T-cell (primary cell): ENCODE measurements at regions of chr11 and their contacts with region 1.

Region 1: GRCh38 chr11:57800444-57801182 is 39.0 kb downstream of the CTNND1 start:
- DNase-seq: peak in 7 of 35 experiments; percentile 4 to 81 (median 20)
- ATAC-seq: peak; percentile 83 to 93 (median 86)
- H3K4me3 ChIP-seq: no peak overlapping the region
- H3K4me3 Mint-ChIP-seq: peak overlapping the region in 2 of 3 donors; percentile 4 to 22
- H3K27ac ChIP-seq: peak overlapping the region; percentile 15
- H3K27ac Mint-ChIP-seq: peak overlapping the region; percentile 77 to 86
- H3K4me1 ChIP-seq: peaks cover 8 to 28% of the 10 kb centered on the region in 2 experiments
- H3K4me1 Mint-ChIP-seq: peaks cover 24 to 32% (median 26%) of the 10 kb centered on the region in 3 donors
- H3K27me3 ChIP-seq: no peaks in the 10 kb centered on the region
- H3K27me3 Mint-ChIP-seq: no peaks in the 10 kb centered on the region

Region 2: DNA sequence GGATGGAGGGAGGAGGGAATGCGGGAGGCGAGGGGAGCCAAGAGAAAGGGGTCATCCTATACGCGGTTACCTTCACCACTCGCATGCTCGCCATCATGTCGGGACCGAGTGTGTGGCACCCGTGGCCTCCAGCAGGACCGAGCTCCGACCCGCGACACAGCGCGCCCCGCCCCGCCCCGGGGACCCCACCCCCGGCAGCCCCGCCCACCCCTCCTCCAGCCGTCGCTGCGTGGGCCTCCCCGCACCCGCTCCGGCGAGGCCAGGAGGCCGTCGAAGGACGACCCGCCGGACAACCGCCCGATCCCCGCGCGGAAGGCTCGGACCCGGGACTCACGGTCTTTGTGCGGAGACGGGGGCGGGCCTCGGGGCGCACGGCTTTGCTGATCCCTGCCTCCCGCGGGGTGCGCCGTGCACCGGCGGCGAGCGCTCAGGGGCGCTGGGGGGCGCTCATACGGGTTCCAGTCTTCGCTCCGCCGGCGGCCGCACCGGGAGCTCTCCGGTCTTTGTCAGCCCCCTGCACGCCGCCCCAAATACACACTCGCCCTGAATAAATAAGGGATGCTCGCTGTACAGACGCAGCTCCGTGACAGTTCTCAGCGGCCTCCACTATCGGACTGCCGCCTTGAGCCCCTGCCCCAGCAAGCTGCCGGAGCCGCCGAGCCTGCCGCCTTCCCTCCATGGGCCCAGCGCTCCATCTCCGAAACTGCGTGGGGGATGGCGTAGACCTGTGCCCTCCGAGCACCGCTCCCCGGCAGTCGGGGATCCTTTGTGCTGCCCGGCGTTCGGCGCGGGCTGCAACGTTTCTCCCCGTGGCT is 232.9 kb before region 1 on chr11 and contains the start of gene UBE2L6:
- CTCF ChIA-PET with region 1: interaction called, 8 to 30 read pairs
- POLR2A ChIA-PET with region 1: no interaction called
- DNase-seq: peak; percentile 36 to 91 (median 70)
- ATAC-seq: peak; percentile 74 to 80 (median 79)
- H3K4me3 ChIP-seq: peak within 1 kb of the TSS; percentile 83 to 100
- H3K4me3 Mint-ChIP-seq: peak within 1 kb of the TSS; percentile 94 to 100 (median 98)
- H3K27ac ChIP-seq: peak within 1 kb of the TSS; percentile 93
- H3K27ac Mint-ChIP-seq: peak within 1 kb of the TSS; percentile 99
- H3K4me1 ChIP-seq: peaks cover 13 to 43% of the 10 kb centered on the region in 2 experiments
- H3K4me1 Mint-ChIP-seq: peaks cover 47 to 65% (median 56%) of the 10 kb centered on the region in 3 donors
- H3K27me3 ChIP-seq: no peaks in the 10 kb centered on the region
- H3K27me3 Mint-ChIP-seq: no peaks in the 10 kb centered on the region
- total RNA-seq, gene UBE2L6: 61.7 to 97.2 (median 80.3) TPM

Region 3: GRCh38 chr11:57712256-57713150 is 88.1 kb before region 1 on chr11 and contains the start of gene TMX2:
- CTCF ChIA-PET with region 1: interaction called, 5 to 29 read pairs
- POLR2A ChIA-PET with region 1: interaction called in 1 of 2 experiments, 4 read pairs
- DNase-seq: peak; percentile 70 to 96 (median 88)
- ATAC-seq: peak; percentile 91 to 92 (median 91)
- H3K4me3 ChIP-seq: peak within 1 kb of the TSS; percentile 90 to 94
- H3K4me3 Mint-ChIP-seq: peak within 1 kb of the TSS; percentile 89 to 97 (median 95)
- H3K27ac ChIP-seq: peak within 1 kb of the TSS; percentile 77
- H3K27ac Mint-ChIP-seq: peak within 1 kb of the TSS; percentile 89 to 90
- H3K4me1 ChIP-seq: peaks cover 19 to 32% of the 10 kb centered on the region in 2 experiments
- H3K4me1 Mint-ChIP-seq: peaks cover 47 to 50% (median 49%) of the 10 kb centered on the region in 3 donors
- H3K27me3 ChIP-seq: no peaks in the 10 kb centered on the region
- H3K27me3 Mint-ChIP-seq: no peaks in the 10 kb centered on the region
- total RNA-seq, gene TMX2: 34.5 to 55.9 (median 51.2) TPM

Region 4: GRCh38 chr11:57741132-57742086 is 59.2 kb before region 1 on chr11 and contains the start of gene SELENOH:
- CTCF ChIA-PET with region 1: interaction called, 3 to 22 read pairs
- POLR2A ChIA-PET with region 1: interaction called, 5 to 6 read pairs
- DNase-seq: peak; percentile 84 to 94 (median 88)
- ATAC-seq: peak; percentile 83 to 88 (median 86)
- H3K4me3 ChIP-seq: peak within 1 kb of the TSS; percentile 73 to 74
- H3K4me3 Mint-ChIP-seq: peak within 1 kb of the TSS; percentile 93 to 99 (median 96)
- H3K27ac ChIP-seq: peak within 1 kb of the TSS; percentile 86
- H3K27ac Mint-ChIP-seq: peak within 1 kb of the TSS; percentile 97 to 99
- H3K4me1 ChIP-seq: peaks cover 9 to 28% of the 10 kb centered on the region in 2 experiments
- H3K4me1 Mint-ChIP-seq: peaks cover 40 to 43% (median 42%) of the 10 kb centered on the region in 3 donors
- H3K27me3 ChIP-seq: no peaks in the 10 kb centered on the region
- H3K27me3 Mint-ChIP-seq: no peaks in the 10 kb centered on the region
- total RNA-seq, gene SELENOH: 88.5 to 155 (median 113) TPM

Region 5: DNA sequence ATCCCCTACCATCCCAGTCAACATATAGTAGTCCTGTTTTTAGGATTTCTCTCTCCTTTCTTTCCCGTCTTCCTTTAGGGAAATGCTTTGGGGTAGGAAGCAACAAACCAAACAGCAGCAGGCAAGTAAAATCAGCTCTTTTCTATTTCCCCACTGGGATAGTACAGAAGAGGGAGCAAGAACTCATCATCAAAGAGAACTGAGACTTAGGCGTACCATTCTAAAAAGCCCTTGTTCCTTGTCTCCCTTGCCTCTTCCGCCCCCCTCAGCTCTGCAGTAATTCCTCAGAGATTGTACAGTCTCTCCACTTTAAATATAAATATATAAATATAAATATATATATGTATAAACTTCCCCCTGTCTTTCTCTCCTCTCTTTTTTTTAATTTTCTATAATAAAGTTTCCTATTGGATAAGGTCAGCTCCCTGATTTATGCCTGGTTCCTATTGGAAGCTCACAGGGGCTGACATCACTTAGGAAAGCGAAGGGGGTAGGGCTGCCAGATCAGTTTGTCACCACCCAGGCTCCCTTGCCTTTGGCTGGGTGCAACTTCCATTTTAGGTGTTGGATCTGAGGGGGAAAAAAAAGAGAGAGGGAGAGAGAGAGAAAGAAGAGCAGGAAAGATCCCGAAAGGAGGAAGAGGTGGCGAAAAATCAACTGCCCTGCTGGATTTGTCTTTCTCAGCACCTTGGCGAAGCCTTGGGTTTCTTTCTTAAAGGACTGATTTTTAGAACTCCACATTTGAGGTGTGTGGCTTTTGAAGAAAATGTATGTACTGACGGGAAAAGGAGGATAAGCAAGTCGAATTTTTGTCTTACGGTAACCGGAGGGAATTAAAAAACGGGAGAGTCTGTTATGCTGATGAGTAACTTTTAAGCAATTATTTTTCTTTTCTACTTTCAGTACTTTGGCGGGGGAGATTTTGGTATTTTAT is 39.0 kb before region 1 on chr11 and contains the start of gene CTNND1:
- CTCF ChIA-PET with region 1: interaction called, 19 to 24 read pairs
- POLR2A ChIA-PET with region 1: interaction called in 1 of 2 experiments, 3 read pairs
- DNase-seq: no peak
- ATAC-seq: no peak
- H3K4me3 ChIP-seq: peak within 1 kb of the TSS in 1 of 2 donors; percentile 10
- H3K4me3 Mint-ChIP-seq: peak within 1 kb of the TSS in 2 of 3 donors; percentile 37 to 56
- H3K27ac ChIP-seq: no peak within 1 kb of the TSS
- H3K27ac Mint-ChIP-seq: no peak within 1 kb of the TSS
- H3K4me1 ChIP-seq: peaks cover 3 to 14% of the 10 kb centered on the region in 2 experiments
- H3K4me1 Mint-ChIP-seq: peaks cover 13 to 35% (median 14%) of the 10 kb centered on the region in 3 donors
- H3K27me3 ChIP-seq: no peaks in the 10 kb centered on the region
- H3K27me3 Mint-ChIP-seq: no peaks in the 10 kb centered on the region
- total RNA-seq, gene CTNND1: 8.3 to 17.5 (median 12.5) TPM